GM10248 (cell line): ENCODE measurements at regions of chr1 and their contacts with region 1.

Region 1: GRCh38 chr1:37682334-37682987 is 9.9 kb upstream of the CDCA8 start:
- DNase-seq: peak; percentile 71
- CTCF ChIP-seq: peak; percentile 76

Region 2: GRCh38 chr1:37449936-37450335 is 232.5 kb before region 1 on chr1:
- CTCF ChIA-PET with region 1: interaction called, 59 read pairs
- POLR2A ChIA-PET with region 1: no interaction called
- DNase-seq: no peak
- CTCF ChIP-seq: no peak

Region 3: GRCh38 chr1:37458528-37458927 is 223.9 kb before region 1 on chr1:
- CTCF ChIA-PET with region 1: interaction called, 59 read pairs
- POLR2A ChIA-PET with region 1: no interaction called
- DNase-seq: no peak
- CTCF ChIP-seq: peak; percentile 13

Region 4: GRCh38 chr1:37595440-37596319 is 86.8 kb before region 1 on chr1 and contains the start of gene GNL2:
- CTCF ChIA-PET with region 1: interaction called, 359 read pairs
- POLR2A ChIA-PET with region 1: no interaction called
- DNase-seq: peak; percentile 99
- CTCF ChIP-seq: no peak

Region 5: DNA sequence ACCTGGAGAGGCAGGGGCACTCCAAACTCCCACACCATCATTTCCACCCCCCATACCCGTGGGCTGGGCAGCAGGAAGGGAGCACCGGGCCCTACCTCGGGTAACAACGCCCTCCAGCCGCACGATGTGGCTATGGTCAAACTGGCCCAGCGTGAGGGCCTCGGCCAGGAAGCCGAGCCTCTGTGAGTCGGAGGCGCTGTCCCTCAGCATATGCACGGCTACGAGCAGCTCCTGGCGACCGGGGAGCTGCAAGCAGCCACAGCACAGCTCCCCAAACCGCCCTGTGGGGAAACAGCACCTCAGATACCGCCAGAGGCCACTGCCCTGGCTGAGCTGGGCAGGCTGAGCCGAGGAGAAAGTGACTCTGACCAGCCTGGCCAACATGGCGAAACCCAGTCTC is 39.1 kb after region 1 on chr1:
- CTCF ChIA-PET with region 1: no interaction called
- POLR2A ChIA-PET with region 1: no interaction called
- DNase-seq: no peak
- CTCF ChIP-seq: no peak

Region 6: DNA sequence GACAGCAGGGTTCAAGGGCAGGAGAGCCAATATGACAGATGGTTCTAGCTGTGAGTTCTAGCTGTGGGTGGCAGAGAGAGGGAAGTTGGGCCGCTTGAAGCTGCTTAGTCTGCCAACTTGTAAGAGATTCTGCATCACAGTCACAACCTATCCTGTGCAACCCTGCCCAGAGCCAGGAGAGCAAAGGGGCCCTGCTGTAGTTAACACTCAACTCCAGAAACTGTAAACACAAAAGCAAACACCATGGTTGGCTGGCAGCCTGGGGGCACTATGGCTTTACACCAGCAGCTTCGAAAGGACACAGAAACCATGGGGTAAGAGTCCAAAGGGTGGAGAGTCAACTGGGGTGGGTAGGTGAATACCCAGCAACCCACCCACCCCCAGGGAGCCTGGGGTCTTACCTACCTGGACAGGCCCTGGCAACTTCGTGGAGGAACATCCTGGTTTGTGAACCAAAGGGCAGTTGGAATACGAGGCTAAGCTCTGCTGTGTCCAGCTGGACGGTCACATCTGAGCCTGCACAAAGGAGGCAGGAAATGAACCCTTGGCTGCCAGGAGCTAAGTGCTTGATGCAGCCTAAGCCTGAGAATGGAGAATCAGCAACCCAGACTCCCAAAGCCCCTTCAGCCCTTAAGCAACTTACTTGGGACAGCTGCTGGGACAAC is 258.0 kb after region 1 on chr1:
- CTCF ChIA-PET with region 1: no interaction called
- POLR2A ChIA-PET with region 1: no interaction called
- DNase-seq: no peak
- CTCF ChIP-seq: no peak